ENCODE measurements at regions of chr13 and their contacts with region 1.

Region 1: DNA sequence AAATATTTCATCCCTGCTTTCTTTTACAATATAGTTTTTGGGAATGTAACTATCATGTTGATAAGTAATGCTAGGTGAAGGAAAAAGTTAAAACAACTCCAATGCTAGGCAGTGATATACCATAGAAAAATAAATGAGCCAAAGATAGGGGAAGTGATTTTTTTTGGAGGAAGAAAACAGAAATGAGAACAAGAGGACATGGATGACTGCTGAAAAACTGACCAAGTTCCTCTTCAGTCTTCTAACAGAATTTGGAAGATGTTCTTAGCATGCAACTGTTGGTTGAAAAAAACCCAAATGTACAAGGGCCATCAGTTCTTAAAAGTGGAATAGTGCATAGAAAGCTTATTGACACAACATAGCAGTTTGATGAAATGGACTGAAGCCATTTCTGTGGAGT is 262.5 kb upstream of the STARD13 start:
- DNase-seq: no peak
- H3K4me3 Mint-ChIP-seq: no peak overlapping the region
- H3K27ac Mint-ChIP-seq: no peak overlapping the region
- H3K4me1 Mint-ChIP-seq: no peaks in the 10 kb centered on the region
- H3K27me3 Mint-ChIP-seq: no peaks in the 10 kb centered on the region
- CTCF ChIP-seq: no peak

Region 2: DNA sequence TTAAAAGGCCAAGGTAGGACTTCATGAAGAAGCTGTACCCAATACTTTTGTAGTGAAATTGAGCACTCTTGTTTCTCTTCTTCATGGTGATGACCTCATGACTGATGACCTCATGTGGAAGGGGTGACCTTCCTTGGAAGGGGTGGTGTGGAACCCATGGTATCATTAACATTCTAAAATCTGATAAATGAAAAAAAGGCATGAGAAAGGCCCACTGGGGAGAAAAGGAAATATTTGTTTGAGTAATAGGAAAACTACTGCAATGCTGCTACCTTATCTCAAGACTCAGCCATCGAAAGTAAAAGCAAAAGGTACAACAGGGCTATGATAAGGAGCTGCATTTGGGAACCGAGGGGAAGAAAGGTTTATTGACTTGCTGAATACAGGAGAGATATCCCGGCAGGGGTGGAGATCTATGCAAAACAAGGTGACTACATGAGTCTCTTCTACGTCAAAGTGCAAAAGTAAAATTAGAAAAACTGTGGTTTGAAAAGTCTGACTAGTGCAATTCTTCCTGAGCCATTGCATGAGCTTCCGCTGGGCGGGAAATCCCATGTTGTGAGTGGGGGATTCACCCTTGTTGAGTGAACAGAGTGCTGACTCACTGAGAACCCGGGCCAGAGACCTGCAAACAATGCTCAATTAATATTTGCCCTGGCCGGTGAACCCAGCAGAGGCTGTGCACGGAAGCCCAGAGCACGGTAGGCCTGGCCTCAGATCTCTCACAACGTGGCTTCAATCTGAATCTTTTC is 131.0 kb after region 1 on chr13:
- CTCF ChIA-PET with region 1: interaction called, 6 read pairs
- intact Hi-C with region 1: loop called (anchors 5 kb)
- DNase-seq: peak; percentile 65
- H3K4me3 Mint-ChIP-seq: peak overlapping the region; percentile 63
- H3K27ac Mint-ChIP-seq: peak overlapping the region; percentile 99
- H3K4me1 Mint-ChIP-seq: peaks cover 44% of the 10 kb centered on the region
- H3K27me3 Mint-ChIP-seq: no peaks in the 10 kb centered on the region
- CTCF ChIP-seq: no peak